Left ventricle myocardium superior (tissue), 1 donor: ENCODE measurements at regions of chr5 and their contacts with region 1.

Region 1: GRCh38 chr5:151002250-151002649 is 18.1 kb upstream of the GPX3 start:
- DNase-seq: no peak
- ATAC-seq: peak; percentile 5

Region 2: DNA sequence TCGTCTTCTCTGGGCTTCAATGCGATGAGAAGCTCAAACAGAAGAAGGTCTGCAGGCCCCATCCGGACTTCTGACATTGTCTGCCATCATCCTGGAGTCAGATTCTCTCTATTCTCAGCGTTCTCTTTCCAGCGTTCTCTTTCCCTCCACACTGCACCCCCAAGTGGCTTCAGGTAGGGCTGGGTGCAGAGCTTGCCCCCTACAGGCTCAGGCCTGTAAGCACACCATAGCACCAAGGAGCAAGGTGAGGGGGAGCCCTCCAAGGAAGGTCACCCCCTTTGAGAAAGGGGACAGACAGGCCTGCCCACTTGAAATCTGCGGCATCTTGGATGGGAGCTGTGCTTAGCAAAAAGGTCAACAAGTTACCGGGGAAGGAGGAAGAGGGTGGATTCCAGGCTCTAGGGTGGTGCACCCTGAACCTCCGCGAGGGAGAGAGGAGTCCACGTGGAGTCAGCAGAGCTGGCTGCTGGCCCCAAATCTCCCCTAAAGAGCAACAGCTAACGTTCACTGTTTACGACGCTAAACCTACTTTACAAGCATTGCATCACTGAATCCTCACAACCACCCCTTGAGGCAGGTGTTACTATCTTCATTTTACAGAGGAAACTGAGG is 45.7 kb after region 1 on chr5:
- intact Hi-C with region 1: loop called (anchors 1 kb)
- DNase-seq: no peak
- ATAC-seq: peak; percentile 79

Region 3: DNA sequence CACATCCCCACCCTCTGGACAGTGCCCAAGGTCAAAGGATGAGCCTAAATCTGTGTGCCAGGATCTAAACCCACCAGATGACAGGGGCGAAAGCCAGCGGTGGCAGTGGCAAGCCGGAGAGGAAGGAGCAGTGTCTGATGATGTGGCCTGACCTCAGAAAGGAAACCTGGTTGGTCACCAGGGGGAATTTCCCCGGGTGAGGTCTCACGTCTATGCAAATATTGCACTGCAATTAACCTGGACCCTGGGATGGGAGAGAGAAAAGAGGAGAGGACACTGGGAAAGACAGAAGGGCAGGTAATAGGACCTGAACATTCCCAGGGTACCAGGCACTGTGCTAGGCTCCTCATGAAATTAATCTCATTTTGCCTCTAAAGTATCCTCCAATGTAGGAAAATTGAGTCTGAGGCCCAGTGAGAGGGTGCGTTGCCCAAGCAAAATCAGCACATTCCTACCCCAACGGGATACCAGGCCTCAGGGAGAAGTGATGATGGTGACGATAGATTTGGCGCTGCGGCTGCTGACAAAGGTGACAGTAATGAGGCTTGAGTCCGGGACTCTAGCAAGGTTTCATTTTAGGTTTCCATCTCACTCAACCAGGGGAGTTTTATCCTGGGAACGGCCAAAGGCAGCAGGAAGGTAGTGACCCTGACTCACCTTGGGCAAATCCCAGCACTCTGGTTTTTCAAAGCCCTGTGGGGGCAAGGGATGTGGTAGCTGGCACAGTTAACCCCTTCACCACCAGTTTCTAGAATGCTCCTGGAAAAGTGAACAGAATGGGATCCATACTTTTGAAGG is 92.0 kb after region 1 on chr5:
- intact Hi-C with region 1: no loop called
- DNase-seq: no peak
- ATAC-seq: no peak

Region 4: DNA sequence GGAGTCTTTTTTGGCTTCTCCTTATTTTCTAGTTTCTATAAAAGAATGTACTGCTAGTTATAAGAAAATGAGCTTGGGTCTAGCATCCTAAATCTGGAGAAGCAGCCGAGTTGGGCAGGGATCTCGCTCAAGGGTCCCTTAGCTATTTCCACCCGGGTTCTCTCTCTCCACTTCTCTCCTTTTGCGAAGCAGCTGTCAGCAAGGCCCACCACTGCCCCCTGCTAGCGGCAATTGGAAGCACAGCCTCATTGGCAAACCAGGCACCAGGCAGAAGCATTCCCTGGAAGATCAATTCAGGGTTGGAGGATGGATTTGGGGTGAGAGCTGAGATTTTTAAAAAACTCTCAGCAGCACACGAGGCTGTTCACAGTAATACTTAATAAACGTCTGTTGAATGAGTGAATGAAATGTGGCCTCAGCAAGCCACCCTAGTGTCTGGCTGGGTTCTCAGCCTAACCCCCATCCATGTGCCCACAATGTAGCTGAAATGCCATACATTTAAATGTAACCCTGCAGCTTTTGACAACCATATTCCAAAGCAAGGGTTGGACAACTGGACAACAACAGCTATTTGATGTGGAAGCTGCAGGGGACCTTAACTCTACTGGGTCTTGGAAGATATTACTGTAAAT is 113.1 kb after region 1 on chr5:
- intact Hi-C with region 1: loop called (anchors 5 kb)
- DNase-seq: peak; percentile 87
- ATAC-seq: peak; percentile 70

Region 5: GRCh38 chr5:151164686-151165392 is 162.6 kb after region 1 on chr5:
- intact Hi-C with region 1: loop called (anchors 5 kb)
- DNase-seq: peak; percentile 72
- ATAC-seq: peak; percentile 92